ENCODE measurements at regions of chr18 and their contacts with region 1.

Region 1: GRCh38 chr18:74342416-74343043 is 26.9 kb downstream of the C18orf63 start:
- DNase-seq: peak; percentile 68

Region 2: GRCh38 chr18:74163019-74163660 is 179.4 kb before region 1 on chr18:
- in situ Hi-C with region 1: no loop called
- DNase-seq: no peak

Region 3: GRCh38 chr18:74196220-74197119 is 146.1 kb before region 1 on chr18:
- in situ Hi-C with region 1: loop called (anchors 25 kb)
- DNase-seq: peak; percentile 67

Measured in ACHN (cell line).